ENCODE measurements at regions of chr5 and their contacts with region 1.

Region 1: DNA sequence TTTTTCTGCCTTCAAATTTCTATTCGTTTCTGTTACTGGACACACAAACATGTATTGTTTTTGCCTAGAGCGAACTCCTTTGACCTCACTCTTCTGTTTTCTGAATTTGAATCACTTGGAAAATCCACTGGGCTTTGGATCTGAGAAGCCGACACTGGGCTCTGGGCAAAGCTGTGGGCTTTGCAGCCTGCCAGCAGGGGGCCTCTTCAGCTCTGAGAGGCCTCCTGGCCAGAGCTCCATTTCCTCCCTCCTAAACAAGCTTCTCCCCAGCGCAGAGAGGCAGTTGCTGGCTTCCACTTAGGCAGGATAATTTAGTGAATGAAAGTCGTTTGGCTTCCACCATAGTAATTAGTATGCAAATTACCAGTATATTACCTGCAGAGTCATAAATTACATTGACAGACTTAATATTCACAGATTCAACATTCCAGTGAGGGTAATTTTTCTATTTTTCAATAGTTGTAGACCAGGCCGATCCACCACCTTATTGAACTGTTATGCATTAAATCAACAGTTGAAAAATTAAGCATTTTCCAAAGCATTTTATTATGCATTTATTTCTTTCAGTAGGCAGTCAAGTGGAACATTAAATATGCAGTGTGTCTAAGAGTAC is 104.0 kb upstream of the ZNF366 start:
- DNase-seq: peak; percentile 43
- ATAC-seq: peak; percentile 98
- H3K4me3 ChIP-seq: no peak overlapping the region
- H3K27ac ChIP-seq: no peak overlapping the region
- H3K4me1 ChIP-seq: no peaks in the 10 kb centered on the region
- H3K27me3 ChIP-seq: no peaks in the 10 kb centered on the region
- CTCF ChIP-seq: peak; percentile 81
- EP300 ChIP-seq: no peak
- POLR2A ChIP-seq: no peak
- RAD21 ChIP-seq: peak; percentile 62; the same call in 1 of the 2 replicates

Region 2: DNA sequence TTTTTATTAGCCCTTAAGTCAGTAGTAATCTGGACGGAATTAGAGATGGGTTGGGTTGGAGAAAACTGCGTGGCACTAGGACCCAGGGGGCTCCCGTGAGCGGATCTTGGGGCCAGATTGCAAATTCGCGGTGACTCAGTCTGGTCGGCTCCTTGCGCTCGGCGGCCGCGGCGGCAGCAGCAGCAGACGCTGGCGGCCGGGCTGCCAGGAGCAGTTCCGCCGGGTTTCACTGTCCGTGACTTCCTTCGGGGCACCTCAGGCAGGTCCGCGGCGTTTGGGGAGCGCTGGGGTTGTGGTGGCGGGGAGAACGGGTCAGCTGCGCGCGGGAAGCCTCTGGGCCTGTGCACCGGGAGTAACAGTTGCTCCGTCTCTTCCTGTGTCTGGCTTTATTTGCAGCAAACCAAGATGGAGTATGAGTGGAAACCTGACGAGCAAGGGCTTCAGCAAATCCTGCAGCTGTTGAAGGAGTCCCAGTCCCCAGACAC is 236.8 kb after region 1 on chr5:
- CTCF ChIA-PET with region 1: no interaction called
- POLR2A ChIA-PET with region 1: no interaction called
- in situ Hi-C with region 1: no loop called
- intact Hi-C with region 1: loop called (anchors 1 kb)
- DNase-seq: peak; percentile 73
- ATAC-seq: peak; percentile 93
- H3K4me3 ChIP-seq: peak overlapping the region; percentile 84 to 99 (median 93)
- H3K27ac ChIP-seq: peak overlapping the region; percentile 96
- H3K4me1 ChIP-seq: peaks cover 38% of the 10 kb centered on the region
- H3K27me3 ChIP-seq: no peaks in the 10 kb centered on the region; a peak in 1 of 5 replicates
- CTCF ChIP-seq: no peak
- EP300 ChIP-seq: 0 out of 4 replicates have a peak, but pooled peaks of 1 of the 2 experiments have one; percentile 20
- POLR2A ChIP-seq: peak; percentile 95 to 96
- RAD21 ChIP-seq: 0 out of 2 replicates have a peak, but pooled peaks have one; percentile 13

Region 3: DNA sequence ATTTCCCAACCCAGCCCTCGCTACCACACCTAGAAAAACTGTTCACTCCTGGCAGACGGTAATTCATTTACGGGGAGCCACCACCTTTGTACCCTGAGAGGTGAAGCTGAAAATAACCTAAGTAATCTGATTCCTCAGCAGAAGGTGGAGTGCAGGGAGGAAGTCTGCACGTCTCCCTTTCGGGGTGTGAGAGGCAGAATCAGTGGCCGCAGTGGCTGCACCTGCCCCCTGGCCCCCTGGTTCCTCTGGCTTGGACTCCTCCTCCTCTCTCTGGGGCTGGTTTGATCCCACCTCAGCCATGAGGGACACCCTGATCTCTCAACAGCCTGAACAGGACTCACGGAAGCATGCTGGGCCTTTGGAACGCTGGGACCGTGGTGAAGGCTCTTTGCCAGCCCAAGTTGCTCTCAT is 572.3 kb after region 1 on chr5:
- CTCF ChIA-PET with region 1: no interaction called
- POLR2A ChIA-PET with region 1: no interaction called
- in situ Hi-C with region 1: no loop called
- intact Hi-C with region 1: no loop called
- DNase-seq: no peak
- ATAC-seq: peak; percentile 66
- H3K4me3 ChIP-seq: no peak overlapping the region
- H3K27ac ChIP-seq: no peak overlapping the region
- H3K4me1 ChIP-seq: peaks cover 9% of the 10 kb centered on the region
- H3K27me3 ChIP-seq: peaks cover 0 to 1% of the 10 kb centered on the region in 2 experiments; a peak in 3 of 5 replicates
- CTCF ChIP-seq: no peak
- EP300 ChIP-seq: no peak
- POLR2A ChIP-seq: no peak
- RAD21 ChIP-seq: no peak